Motor neuron (in vitro differentiated cells): ENCODE measurements at regions of chr4 and their contacts with region 1.

Region 1: GRCh38 chr4:165131247-165131832 is 18.7 kb upstream of the TMEM192 start:
- ATAC-seq: peak; percentile 52 to 93 (median 71)
- H3K4me3 ChIP-seq: no peak overlapping the region
- H3K27ac ChIP-seq: no peak overlapping the region
- H3K4me1 ChIP-seq: no peaks in the 10 kb centered on the region

Region 2: GRCh38 chr4:164753872-164754488 is 377.4 kb before region 1 on chr4 and contains the start of gene SMIM31:
- in situ Hi-C with region 1: no loop called
- ATAC-seq: no peak
- H3K4me3 ChIP-seq: no peak within 1 kb of the TSS
- H3K27ac ChIP-seq: no peak within 1 kb of the TSS
- H3K4me1 ChIP-seq: no peaks in the 10 kb centered on the region
- total RNA-seq, gene SMIM31: 0.05 to 0.28 (median 0.13) TPM in 5 of 8 experiments, not detected in the others

Region 3: DNA sequence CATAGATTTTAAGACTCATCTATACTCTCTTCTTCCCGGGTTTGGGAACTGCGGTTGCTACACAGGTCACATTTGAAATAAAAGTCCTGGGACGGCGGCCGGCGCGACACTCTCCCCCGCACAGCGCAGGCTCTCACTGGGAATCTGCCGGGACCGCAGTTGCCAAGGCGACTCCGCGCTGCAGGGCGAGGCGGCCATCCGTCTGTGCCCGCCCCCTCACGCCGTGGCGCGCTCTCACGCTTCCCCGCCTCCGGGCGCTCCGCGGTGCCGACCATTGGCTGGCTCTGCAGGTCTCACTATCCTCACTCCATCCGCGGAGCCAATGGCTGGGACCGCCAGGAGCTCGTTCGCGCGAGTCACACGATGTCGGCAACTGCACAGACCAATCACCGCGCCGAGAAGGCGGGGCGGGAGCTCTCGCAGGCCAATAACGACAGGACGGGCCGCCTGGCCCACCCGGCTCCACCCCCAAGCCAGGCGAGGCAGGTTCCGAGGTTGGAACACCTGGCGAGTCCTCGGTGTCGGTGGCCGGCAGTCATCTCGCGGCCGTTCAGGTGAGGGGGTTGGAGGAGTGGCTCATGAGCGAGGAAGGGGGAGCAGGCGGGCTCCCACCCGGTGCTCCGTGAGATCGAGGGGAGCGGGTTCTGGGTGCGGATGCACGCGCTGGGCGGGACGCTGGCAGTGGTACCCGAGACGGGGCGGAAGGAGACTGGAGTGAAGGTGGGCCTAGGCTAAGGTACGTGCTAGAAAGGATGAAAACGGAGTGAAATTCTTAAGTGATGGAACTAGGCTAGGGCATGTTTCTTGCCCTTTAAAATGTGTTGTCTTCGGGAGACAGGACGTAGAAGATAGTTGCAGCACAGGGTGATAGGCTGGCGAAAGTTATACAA is 196.1 kb after region 1 on chr4 and contains the start of gene MSMO1:
- in situ Hi-C with region 1: loop called in 2 of 9 experiments (anchors 25 kb)
- ATAC-seq: peak; percentile 92 to 96 (median 95)
- H3K4me3 ChIP-seq: peak within 1 kb of the TSS; percentile 77 to 93 (median 79)
- H3K27ac ChIP-seq: peak within 1 kb of the TSS; percentile 70 to 74
- H3K4me1 ChIP-seq: peaks cover 11 to 27% of the 10 kb centered on the region in 2 donors
- total RNA-seq, gene MSMO1: 51.0 to 211 (median 127) TPM

Region 4: DNA sequence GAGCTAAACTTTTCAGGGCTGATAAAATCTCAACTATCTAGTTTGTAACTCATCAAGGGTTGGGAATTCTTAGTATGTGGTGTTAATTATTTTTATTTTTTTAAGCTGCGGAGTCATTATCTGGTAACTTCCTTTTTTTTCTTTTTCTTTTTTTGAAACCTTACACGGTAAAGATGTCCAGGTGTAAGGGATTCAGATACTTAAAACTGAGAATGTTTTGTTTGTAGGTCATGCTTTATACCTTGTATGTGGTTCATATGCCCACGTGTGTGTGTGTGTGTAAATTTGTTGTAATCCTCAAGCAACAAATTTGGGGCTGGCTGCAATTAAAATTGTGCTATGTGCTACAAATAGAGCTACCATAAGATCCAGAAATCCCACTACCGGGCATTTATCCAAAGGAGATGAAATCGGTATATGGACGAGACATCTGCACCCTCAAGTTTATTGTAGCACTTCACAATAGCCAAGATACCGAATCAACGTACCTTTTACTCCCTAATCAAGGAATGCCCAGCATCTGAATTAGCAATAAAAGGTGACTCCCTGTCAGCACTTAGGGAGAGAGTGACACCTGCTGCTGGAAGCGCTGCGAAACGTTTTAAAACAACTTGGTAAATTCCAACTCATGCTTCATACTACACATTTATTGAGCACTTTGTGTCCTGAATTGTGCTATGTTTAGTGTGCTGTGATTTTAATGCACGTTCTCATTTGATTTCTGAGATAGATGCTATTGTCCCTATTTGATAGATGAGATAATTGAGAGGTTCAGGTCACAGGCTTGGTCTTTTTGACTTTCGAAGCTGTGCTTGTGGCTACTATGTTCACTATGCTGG is 212.2 kb after region 1 on chr4:
- in situ Hi-C with region 1: loop called in 3 of 9 experiments (anchors 10 to 25 kb)
- ATAC-seq: peak in 1 of 8 experiments; percentile 17
- H3K4me3 ChIP-seq: no peak overlapping the region
- H3K27ac ChIP-seq: no peak overlapping the region
- H3K4me1 ChIP-seq: peaks cover 0 to 9% of the 10 kb centered on the region in 2 donors